Activated T-helper 1 cell treated with anti-CD3 and anti-CD28 coated beads, Interleukin-12 subunit alpha, Interleukin-12 subunit beta, Interleukin-2, Interleukin-4 antibody, amounts not matched to agents 30 ng/mL and 10 ng/mL and 1 ng/mL, durations not matched to agents 14 hours and 24 hours and 36 hours (primary cell): ENCODE measurements at regions of chr11 and their contacts with region 1.

Region 1: DNA sequence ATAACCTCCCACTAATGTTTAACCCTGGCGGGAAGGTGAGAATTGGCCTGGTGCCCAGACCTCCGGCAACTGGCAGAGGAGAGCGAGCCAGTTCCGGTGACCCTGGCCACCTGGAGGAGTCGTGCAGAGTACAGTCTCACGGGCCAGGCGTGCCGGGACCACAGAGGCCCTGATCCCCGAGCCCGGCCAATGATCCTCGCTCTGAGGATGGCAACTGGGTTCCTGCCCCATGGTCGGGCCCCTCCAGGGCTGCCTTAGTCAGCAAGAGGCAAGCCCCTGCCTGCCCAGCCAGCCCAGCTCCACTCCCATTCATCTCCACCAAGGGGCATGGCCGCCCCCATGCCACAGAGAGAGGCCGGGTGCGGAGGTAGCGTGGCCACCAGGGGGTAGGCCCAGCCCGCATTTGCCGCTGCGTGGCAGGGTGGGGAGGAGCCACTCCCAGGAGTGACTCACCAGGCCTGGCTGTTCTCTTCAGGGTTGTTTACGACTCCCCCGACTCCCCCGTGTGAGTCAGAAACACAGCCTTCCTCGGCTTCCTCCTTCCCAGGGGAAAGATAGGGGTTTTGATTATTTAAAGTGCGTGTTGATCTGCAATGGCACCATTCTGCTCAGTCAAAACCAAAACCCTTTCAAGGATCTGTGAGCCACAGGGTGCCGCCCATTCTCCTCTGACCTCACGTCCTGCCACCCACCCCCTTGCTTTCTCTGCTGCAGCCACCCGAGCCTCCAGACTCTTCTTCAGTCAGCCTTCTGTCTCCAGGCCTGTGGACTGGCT is at the start of gene SLC25A45:
- DNase-seq: peak; percentile 87
- H3K4me3 Mint-ChIP-seq: peak within 1 kb of the TSS; percentile 92
- H3K27ac Mint-ChIP-seq: peak within 1 kb of the TSS; percentile 99
- H3K4me1 Mint-ChIP-seq: peaks cover 34% of the 10 kb centered on the region
- H3K27me3 Mint-ChIP-seq: no peaks in the 10 kb centered on the region
- total RNA-seq, gene SLC25A45: 15.3 and 19.4 TPM in 2 replicates

Region 2: GRCh38 chr11:64887757-64888405 is 494.3 kb before region 1 on chr11:
- intact Hi-C with region 1: no loop called
- DNase-seq: peak; percentile 81
- H3K4me3 Mint-ChIP-seq: peak overlapping the region; percentile 80
- H3K27ac Mint-ChIP-seq: peak overlapping the region; percentile 86
- H3K4me1 Mint-ChIP-seq: peaks cover 28% of the 10 kb centered on the region
- H3K27me3 Mint-ChIP-seq: no peaks in the 10 kb centered on the region

Region 3: GRCh38 chr11:65314501-65315203 is 67.6 kb before region 1 on chr11 and contains the start of gene CDC42EP2:
- intact Hi-C with region 1: no loop called
- DNase-seq: peak; percentile 72
- H3K4me3 Mint-ChIP-seq: peak within 1 kb of the TSS; percentile 73
- H3K27ac Mint-ChIP-seq: no peak within 1 kb of the TSS
- H3K4me1 Mint-ChIP-seq: peaks cover 7% of the 10 kb centered on the region
- H3K27me3 Mint-ChIP-seq: peaks cover 10% of the 10 kb centered on the region
- total RNA-seq, gene CDC42EP2: 1.6 and 2.7 TPM in 2 replicates

Region 4: DNA sequence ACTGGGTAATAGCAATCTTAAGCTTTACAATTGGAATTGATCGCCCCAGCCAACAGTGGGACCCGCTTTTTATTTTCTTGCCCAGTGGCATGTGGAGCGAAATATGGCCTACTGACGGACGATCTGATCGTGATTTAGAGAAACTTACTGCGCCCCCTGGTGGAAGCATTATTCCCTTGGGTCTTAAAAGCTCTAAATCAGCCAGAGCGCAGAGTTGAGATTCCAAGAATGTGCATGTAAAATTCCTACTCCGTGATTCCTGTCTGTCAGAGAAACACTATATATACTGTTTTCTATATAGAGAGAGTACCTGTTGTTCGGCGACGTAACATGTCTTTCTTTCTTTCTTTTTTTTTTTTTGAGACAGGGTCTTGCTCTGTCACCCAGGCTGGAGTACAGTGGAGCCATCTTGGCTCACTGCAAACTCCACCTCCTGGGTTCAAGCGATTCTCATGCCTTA is 52.2 kb before region 1 on chr11:
- intact Hi-C with region 1: loop called (anchors 1 kb)
- DNase-seq: peak; percentile 67
- H3K4me3 Mint-ChIP-seq: no peak overlapping the region
- H3K27ac Mint-ChIP-seq: no peak overlapping the region
- H3K4me1 Mint-ChIP-seq: peaks cover 16% of the 10 kb centered on the region
- H3K27me3 Mint-ChIP-seq: peaks cover 4% of the 10 kb centered on the region

Region 5: GRCh38 chr11:65418711-65419459 is 36.7 kb after region 1 on chr11:
- intact Hi-C with region 1: loop called (anchors 1 kb)
- DNase-seq: peak; percentile 88
- H3K4me3 Mint-ChIP-seq: peak overlapping the region; percentile 99
- H3K27ac Mint-ChIP-seq: peak overlapping the region; percentile 100
- H3K4me1 Mint-ChIP-seq: peaks cover 57% of the 10 kb centered on the region
- H3K27me3 Mint-ChIP-seq: peaks cover 9% of the 10 kb centered on the region

Region 6: GRCh38 chr11:65477149-65477965 is 95.1 kb after region 1 on chr11:
- intact Hi-C with region 1: loop called (anchors 1 kb)
- DNase-seq: peak; percentile 89
- H3K4me3 Mint-ChIP-seq: peak overlapping the region; percentile 99
- H3K27ac Mint-ChIP-seq: peak overlapping the region; percentile 100
- H3K4me1 Mint-ChIP-seq: peaks cover 9% of the 10 kb centered on the region
- H3K27me3 Mint-ChIP-seq: peaks cover 4% of the 10 kb centered on the region

Region 7: DNA sequence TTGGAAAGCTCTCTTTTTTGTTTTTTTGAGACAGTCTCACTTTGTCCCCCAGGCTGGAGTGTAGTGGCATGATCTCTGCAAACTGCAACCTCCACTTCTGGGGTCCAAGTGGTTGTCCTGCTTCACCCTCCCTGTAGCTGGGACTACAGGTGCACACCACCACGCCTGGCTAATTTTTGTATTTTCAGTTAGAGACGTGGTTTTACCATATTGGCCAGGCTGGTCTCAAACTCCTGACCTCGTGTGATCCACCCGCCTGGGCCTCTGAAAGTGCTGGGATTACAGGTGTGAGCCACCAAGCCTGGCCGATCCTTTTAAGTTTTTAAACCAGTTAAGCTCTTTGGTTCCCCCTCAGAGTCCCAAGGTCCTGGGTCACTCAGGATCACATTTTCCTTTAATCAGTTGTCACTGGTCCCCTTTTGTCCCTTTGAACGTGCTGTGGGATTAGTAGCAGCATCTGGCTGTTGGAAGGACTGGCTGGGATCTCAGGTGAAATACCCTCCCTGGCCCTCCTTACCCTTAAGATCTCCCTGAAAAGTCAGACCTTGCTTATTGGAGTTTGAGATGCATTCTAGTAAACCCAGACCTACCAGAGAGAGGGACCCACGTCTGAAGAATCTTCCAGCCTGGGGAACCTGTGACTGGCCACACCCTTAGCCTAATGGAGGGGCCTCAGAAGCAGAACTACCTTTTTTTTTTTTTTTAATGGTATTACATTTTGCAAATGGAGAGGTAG is 124.7 kb after region 1 on chr11:
- intact Hi-C with region 1: loop called (anchors 1 kb)
- DNase-seq: peak; percentile 31
- H3K4me3 Mint-ChIP-seq: no peak overlapping the region
- H3K27ac Mint-ChIP-seq: peak overlapping the region; percentile 72
- H3K4me1 Mint-ChIP-seq: peaks cover 56% of the 10 kb centered on the region
- H3K27me3 Mint-ChIP-seq: no peaks in the 10 kb centered on the region

Region 8: GRCh38 chr11:65588199-65589054 is 206.2 kb after region 1 on chr11:
- intact Hi-C with region 1: loop called (anchors 1 kb)
- DNase-seq: peak; percentile 67
- H3K4me3 Mint-ChIP-seq: peak overlapping the region; percentile 66
- H3K27ac Mint-ChIP-seq: peak overlapping the region; percentile 94
- H3K4me1 Mint-ChIP-seq: peaks cover 31% of the 10 kb centered on the region
- H3K27me3 Mint-ChIP-seq: no peaks in the 10 kb centered on the region